ENCODE measurements at regions of chr4 and their contacts with region 1.

Region 1: DNA sequence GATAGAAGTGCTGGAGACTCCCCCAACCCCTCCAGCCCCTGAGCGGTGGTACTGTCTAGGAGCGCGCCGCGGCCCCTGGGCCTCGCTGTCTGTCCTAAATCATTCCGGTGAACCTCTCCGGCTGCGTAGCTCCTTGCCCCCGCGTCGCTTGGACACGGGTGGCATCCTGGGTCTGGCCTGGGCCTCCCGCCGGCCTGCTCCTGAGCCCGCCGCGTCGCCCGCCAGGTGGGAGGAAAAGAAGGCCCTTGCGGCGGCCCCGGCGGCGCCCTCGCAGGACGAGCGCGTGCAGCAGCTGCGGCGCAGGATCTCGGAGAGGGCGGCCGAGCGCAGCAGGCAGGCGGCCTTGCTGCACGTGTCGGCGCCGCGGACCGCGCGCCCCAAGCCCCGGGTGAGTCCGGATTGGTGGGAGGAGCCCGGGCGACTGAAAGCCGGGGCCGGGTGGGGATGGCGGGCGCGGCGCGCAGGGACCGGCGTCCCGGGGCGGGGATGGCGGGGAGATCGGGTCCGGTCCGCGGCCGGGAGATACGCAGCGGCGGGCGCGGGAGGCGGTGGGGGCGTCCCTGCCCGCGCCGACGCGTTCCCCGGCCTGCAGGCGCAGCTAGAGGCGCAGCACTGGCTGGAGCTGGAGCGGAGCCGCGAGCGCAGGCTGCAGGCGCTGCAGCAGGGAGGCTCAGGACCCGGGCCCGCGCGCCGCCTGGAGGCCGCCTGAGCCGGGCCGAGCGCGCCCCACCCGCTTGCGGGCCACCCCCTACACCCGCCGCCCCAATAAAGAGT is 6.5 kb upstream of the RNF4 start:
- DNase-seq: peak; percentile 42 to 76 (median 66)
- ATAC-seq: peak; percentile 97
- H3K4me3 ChIP-seq: peak overlapping the region; percentile 44
- H3K4me3 Mint-ChIP-seq: peak overlapping the region; percentile 65 to 87 (median 81)
- H3K27ac ChIP-seq: peak overlapping the region; percentile 41
- H3K27ac Mint-ChIP-seq: peak overlapping the region in 2 of 9 donors; percentile 14 to 45
- H3K4me1 ChIP-seq: peaks cover 0 to 5% of the 10 kb centered on the region in 2 donors
- H3K4me1 Mint-ChIP-seq: peaks cover 6 to 21% (median 16%) of the 10 kb centered on the region in 7 donors
- H3K27me3 ChIP-seq: no peaks in the 10 kb centered on the region
- H3K27me3 Mint-ChIP-seq: peaks cover 0 to 38% (median 7%) of the 10 kb centered on the region in 5 donors

Region 2: DNA sequence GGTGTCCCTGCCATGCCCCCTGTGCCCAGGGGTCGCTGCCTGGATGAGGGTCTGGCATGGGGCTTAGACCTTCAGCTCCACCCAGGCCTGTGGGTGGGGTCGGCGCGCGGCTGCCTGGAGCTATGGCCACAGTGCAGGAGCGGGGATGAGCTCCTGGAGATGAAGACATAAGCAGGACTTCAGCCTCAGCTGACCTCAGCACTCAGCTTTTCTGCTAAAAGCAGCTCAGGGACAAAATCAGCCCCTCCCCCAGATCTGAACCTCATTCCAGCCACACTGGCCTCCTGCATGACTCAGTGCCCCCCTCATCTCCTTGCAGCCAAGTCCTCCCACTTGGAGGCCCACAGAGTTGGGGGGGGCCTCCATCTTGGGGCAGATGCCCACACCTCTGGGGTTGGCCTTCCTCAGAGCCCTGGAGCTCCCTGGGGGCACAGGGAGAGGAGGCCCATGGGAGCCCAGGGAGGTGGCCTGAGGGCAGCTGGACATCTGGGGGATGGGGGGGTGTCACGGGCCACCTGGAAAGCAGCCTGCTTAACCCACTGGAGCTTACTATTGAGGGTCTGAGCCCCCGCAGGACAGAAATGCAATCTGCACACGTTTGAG is 1617.1 kb before region 1 on chr4:
- CTCF ChIA-PET with region 1: no interaction called
- POLR2A ChIA-PET with region 1: no interaction called
- intact Hi-C with region 1: no loop called
- DNase-seq: no peak
- ATAC-seq: no peak
- H3K4me3 ChIP-seq: no peak overlapping the region
- H3K4me3 Mint-ChIP-seq: no peak overlapping the region
- H3K27ac ChIP-seq: no peak overlapping the region
- H3K27ac Mint-ChIP-seq: no peak overlapping the region
- H3K4me1 ChIP-seq: no peaks in the 10 kb centered on the region
- H3K4me1 Mint-ChIP-seq: no peaks in the 10 kb centered on the region
- H3K27me3 ChIP-seq: no peaks in the 10 kb centered on the region
- H3K27me3 Mint-ChIP-seq: no peaks in the 10 kb centered on the region

Region 3: DNA sequence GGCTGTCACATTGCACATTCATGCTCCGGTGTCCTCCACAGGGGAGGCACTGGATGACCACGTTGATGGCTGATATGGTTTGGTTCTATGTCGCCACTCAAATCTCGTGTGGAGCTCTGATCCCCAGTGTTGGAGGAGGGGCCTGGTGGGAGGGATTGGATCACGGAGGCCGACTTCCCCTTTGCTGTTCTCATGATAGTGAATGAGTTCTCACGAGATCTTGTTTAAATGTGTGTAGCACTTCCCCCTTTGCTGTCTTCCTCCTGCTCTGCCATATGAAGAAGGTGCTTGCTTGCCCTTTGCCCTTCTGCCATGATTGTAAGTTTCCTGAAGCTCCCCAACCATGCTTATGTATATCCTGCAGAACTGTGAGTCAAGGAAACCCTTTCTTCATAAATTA is 425.5 kb before region 1 on chr4:
- CTCF ChIA-PET with region 1: no interaction called
- POLR2A ChIA-PET with region 1: no interaction called
- intact Hi-C with region 1: no loop called
- DNase-seq: no peak
- ATAC-seq: no peak
- H3K4me3 ChIP-seq: no peak overlapping the region
- H3K4me3 Mint-ChIP-seq: no peak overlapping the region
- H3K27ac ChIP-seq: no peak overlapping the region
- H3K27ac Mint-ChIP-seq: peak overlapping the region in 1 of 9 donors; percentile 11
- H3K4me1 ChIP-seq: peaks cover 0 to 4% of the 10 kb centered on the region in 2 donors
- H3K4me1 Mint-ChIP-seq: peaks cover 0 to 5% (median 5%) of the 10 kb centered on the region in 7 donors
- H3K27me3 ChIP-seq: peaks cover 0 to 7% of the 10 kb centered on the region in 2 donors
- H3K27me3 Mint-ChIP-seq: peaks cover 22 to 57% (median 38%) of the 10 kb centered on the region in 5 donors

Region 4: GRCh38 chr4:2281575-2282343 is 180.6 kb before region 1 on chr4:
- CTCF ChIA-PET with region 1: interaction called, 4 read pairs
- POLR2A ChIA-PET with region 1: interaction called, 3 read pairs
- intact Hi-C with region 1: loop called in 1 of 2 experiments (anchors 1 kb)
- DNase-seq: peak; percentile 51 to 96 (median 94)
- ATAC-seq: peak; percentile 95
- H3K4me3 ChIP-seq: peak overlapping the region; percentile 33
- H3K4me3 Mint-ChIP-seq: peak overlapping the region; percentile 73 to 90 (median 84)
- H3K27ac ChIP-seq: peak overlapping the region; percentile 81
- H3K27ac Mint-ChIP-seq: peak overlapping the region; percentile 91 to 100 (median 99)
- H3K4me1 ChIP-seq: peaks cover 31 to 34% of the 10 kb centered on the region in 2 donors
- H3K4me1 Mint-ChIP-seq: peaks cover 27 to 64% (median 50%) of the 10 kb centered on the region in 7 donors
- H3K27me3 ChIP-seq: no peaks in the 10 kb centered on the region
- H3K27me3 Mint-ChIP-seq: no peaks in the 10 kb centered on the region

Region 5: GRCh38 chr4:2393353-2394270 is 68.8 kb before region 1 on chr4:
- CTCF ChIA-PET with region 1: no interaction called
- POLR2A ChIA-PET with region 1: no interaction called
- intact Hi-C with region 1: loop called in 1 of 2 experiments (anchors 1 kb)
- DNase-seq: peak in 4 of 9 donors; percentile 19 to 32 (median 22)
- ATAC-seq: peak; percentile 60
- H3K4me3 ChIP-seq: no peak overlapping the region
- H3K4me3 Mint-ChIP-seq: peak overlapping the region; percentile 47 to 86 (median 66)
- H3K27ac ChIP-seq: no peak overlapping the region
- H3K27ac Mint-ChIP-seq: peak overlapping the region in 4 of 9 donors; percentile 60 to 87 (median 83)
- H3K4me1 ChIP-seq: peaks cover 11 to 15% of the 10 kb centered on the region in 2 donors
- H3K4me1 Mint-ChIP-seq: peaks cover 20 to 45% (median 26%) of the 10 kb centered on the region in 7 donors
- H3K27me3 ChIP-seq: no peaks in the 10 kb centered on the region
- H3K27me3 Mint-ChIP-seq: peaks cover 0 to 44% (median 0%) of the 10 kb centered on the region in 5 donors

Region 6: DNA sequence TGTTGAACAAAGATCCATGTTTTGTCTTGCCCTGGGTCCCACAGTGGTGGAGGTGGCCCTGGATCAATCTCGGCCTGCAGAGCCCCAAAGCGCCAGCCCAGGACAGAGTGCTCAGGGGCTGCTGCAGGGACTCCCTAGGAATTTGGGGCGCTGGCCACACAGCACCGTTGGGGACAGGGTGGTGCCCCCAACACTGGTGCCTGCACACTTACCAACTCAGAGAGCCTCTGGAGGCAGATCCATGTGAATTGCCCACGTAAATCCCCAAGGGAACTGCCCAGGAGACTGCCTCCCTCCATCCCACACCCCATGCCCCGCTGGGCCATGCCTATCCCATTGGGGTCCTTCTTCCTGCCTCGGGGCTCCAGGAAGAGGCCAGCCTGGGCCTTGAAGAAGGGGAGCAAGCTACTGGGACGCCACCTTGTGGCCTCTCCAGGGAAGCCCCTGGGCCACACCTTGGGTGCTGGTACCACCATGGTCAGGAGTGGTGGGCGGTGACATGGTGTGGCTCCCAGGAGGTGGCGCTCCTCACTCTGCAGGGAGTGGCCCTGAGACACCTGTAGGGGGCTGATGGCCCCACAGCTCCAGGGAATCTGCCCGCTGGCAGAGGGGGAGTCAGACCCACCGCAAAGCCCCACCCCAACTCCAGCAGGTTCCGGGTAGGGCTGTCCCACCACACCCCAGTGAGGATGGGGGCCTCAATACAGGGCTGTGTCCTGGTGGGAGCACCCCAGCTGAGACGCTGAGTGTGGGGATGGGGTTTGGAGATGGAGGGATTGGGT is 20.8 kb before region 1 on chr4:
- CTCF ChIA-PET with region 1: interaction called, 3 read pairs
- POLR2A ChIA-PET with region 1: no interaction called
- intact Hi-C with region 1: loop called in 1 of 2 experiments (anchors 2 kb)
- DNase-seq: peak; percentile 41 to 69 (median 57)
- ATAC-seq: peak; percentile 96
- H3K4me3 ChIP-seq: no peak overlapping the region
- H3K4me3 Mint-ChIP-seq: no peak overlapping the region
- H3K27ac ChIP-seq: no peak overlapping the region
- H3K27ac Mint-ChIP-seq: peak overlapping the region in 2 of 9 donors; percentile 4 to 20
- H3K4me1 ChIP-seq: peaks cover 0 to 4% of the 10 kb centered on the region in 2 donors
- H3K4me1 Mint-ChIP-seq: peaks cover 0 to 5% (median 3%) of the 10 kb centered on the region in 7 donors
- H3K27me3 ChIP-seq: no peaks in the 10 kb centered on the region
- H3K27me3 Mint-ChIP-seq: no peaks in the 10 kb centered on the region

Region 7: GRCh38 chr4:2617955-2618354 is 155.6 kb after region 1 on chr4:
- CTCF ChIA-PET with region 1: no interaction called
- POLR2A ChIA-PET with region 1: no interaction called
- intact Hi-C with region 1: no loop called
- DNase-seq: no peak
- ATAC-seq: no peak
- H3K4me3 ChIP-seq: no peak overlapping the region
- H3K4me3 Mint-ChIP-seq: no peak overlapping the region
- H3K27ac ChIP-seq: no peak overlapping the region
- H3K27ac Mint-ChIP-seq: peak overlapping the region in 1 of 9 donors; percentile 73
- H3K4me1 ChIP-seq: no peaks in the 10 kb centered on the region
- H3K4me1 Mint-ChIP-seq: peaks cover 10 to 66% (median 55%) of the 10 kb centered on the region in 7 donors
- H3K27me3 ChIP-seq: no peaks in the 10 kb centered on the region
- H3K27me3 Mint-ChIP-seq: no peaks in the 10 kb centered on the region